GM10248 (cell line): ENCODE measurements at regions of chr15 and their contacts with region 1.

Region 1: DNA sequence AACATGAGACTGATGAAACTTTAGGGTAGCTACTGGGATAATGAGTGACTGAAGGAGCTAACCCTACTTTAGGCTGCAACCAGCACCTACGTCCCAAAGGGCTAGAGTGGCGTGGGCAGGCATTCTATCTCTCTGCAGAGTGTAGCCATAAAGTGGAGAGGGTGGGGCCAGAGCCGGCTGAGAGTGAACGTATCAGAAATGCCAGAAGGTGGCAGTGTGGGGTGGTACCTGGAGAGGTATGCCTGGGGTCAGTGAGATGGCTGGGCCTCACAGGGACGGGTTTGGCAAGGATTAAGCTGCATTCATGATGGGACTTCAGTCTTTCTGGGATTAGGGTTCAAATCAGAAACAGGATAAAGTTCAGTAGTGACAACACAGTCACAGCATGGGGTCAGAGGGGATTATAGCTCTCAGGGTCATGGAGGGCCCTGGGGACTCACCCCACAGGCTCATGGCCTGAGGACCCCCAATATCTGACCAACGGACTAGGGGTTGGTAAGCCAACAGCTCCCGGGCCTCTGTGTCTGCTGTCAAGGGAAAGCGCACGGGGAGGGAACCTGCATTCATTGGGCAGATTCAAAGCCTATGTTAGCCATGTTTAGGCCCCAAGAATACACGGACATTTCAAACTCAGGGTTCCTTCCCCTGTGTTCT is 86.5 kb upstream of the FOXB1 start:
- DNase-seq: peak; percentile 68
- CTCF ChIP-seq: peak; percentile 75

Region 2: DNA sequence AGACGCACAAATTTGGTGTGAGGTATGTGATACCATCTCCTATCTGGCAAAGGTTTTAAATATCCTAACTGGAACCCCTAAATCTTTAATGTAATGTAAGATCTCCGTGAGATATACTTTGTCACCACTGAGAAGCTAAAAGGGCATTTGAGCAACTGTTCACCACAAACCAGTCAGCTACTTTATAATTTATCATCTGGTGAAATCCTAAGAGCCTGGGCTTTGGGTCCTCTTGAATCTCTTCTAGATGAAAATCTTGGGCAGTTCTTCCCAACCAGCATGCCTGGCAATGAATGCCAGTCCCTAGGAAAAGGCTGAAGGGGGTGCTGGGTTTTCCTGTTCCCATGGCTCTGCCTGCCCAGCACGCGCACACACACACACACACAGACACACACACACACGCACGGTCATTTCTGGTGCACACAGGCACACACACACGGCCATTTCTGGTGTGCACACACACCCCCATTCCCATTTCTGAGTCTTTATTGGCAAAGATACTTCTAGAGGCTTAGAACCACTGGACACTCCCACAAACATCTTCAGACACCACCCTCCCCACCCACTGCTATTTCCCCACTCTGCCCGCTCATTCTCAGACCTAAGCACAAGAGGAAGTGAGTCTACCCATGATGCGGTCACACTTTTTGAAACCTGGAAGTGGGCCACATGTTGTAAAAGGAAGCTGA is 617.6 kb before region 1 on chr15:
- CTCF ChIA-PET with region 1: no interaction called
- POLR2A ChIA-PET with region 1: no interaction called
- DNase-seq: peak; percentile 70
- CTCF ChIP-seq: no peak

Region 3: DNA sequence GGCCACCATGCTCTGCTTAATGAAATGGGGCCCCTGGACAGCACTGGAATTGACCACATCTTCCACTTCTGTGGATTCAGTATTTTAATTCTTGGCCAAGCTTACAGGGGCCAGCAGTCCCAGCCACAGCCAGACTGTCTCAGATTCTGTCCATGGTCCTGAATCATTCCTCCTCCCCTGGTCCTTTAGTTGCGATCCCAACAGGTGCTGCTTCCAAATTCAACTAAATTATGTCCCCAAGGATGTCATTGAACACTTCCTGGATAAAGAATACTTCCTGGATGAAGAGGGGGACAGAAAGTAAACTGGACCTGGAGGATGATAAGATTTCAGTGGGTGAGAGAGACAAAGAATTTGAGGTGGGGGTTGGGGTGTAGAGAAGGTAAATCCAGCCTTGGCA is 24.6 kb before region 1 on chr15:
- CTCF ChIA-PET with region 1: no interaction called
- POLR2A ChIA-PET with region 1: no interaction called
- DNase-seq: no peak
- CTCF ChIP-seq: no peak

Region 4: GRCh38 chr15:59904450-59905135 is 13.0 kb before region 1 on chr15:
- CTCF ChIA-PET with region 1: interaction called, 12 read pairs
- POLR2A ChIA-PET with region 1: no interaction called
- DNase-seq: no peak
- CTCF ChIP-seq: no peak

Region 5: DNA sequence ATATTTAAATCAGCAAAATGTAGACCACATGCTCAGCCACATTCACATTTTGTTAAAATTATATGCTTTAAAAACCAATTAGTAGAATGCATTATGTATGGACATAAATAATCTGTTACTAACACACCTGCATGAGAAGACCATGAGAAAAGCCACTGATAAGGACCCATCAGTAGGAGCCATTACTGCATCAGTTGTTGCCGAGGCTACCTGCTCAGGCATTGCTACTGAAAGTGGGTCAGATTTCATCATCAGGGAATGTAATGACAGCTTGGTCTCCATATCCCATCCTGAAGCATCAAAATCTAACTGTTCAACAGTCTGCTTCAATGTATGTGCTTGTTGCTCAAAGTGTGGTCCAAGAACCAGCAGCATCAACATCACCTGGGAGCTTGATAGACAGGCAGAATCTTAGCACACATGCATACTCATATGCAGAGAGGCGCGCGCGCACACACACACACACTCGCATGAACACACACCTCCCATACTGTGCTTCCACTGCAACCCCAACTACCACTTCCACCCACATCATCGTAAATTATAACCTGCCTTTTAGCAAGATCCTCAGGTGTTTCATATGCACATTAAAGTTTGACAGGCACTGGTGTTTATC is 14.1 kb after region 1 on chr15:
- CTCF ChIA-PET with region 1: interaction called, 11 read pairs
- POLR2A ChIA-PET with region 1: no interaction called
- DNase-seq: no peak
- CTCF ChIP-seq: no peak

Region 6: GRCh38 chr15:59941612-59942011 is 24.0 kb after region 1 on chr15:
- CTCF ChIA-PET with region 1: interaction called, 13 read pairs
- POLR2A ChIA-PET with region 1: no interaction called
- DNase-seq: no peak
- CTCF ChIP-seq: no peak

Region 7: DNA sequence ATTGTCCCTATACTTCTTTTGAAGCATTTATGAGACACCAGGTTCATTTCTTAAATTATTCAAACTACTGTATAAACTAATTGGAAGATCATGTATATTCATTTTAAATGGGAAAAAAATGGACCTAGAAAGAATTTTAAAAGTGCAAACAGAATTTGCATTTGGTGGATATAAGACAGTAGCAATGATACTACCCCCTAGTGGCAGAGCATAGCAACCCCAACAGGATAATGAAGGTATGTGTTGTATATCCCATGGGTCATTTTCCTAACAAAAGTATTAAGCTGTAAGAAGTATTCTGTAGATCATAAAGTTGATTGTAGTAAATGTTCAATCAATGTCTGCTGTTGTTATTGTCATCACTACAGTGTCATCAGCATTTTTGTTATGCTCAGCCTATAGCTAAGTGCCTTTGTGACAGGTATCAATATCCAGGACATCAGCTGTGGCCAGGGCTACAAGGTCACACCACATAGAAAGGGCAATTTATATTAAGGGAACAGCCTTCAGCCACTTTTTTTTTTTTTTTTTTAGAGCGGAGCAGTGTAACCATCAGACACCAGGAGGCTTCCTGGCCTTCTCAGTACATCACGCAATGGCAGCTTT is 262.3 kb after region 1 on chr15:
- CTCF ChIA-PET with region 1: interaction called, 56 read pairs
- POLR2A ChIA-PET with region 1: no interaction called
- DNase-seq: peak; percentile 21
- CTCF ChIP-seq: peak; percentile 79

Region 8: DNA sequence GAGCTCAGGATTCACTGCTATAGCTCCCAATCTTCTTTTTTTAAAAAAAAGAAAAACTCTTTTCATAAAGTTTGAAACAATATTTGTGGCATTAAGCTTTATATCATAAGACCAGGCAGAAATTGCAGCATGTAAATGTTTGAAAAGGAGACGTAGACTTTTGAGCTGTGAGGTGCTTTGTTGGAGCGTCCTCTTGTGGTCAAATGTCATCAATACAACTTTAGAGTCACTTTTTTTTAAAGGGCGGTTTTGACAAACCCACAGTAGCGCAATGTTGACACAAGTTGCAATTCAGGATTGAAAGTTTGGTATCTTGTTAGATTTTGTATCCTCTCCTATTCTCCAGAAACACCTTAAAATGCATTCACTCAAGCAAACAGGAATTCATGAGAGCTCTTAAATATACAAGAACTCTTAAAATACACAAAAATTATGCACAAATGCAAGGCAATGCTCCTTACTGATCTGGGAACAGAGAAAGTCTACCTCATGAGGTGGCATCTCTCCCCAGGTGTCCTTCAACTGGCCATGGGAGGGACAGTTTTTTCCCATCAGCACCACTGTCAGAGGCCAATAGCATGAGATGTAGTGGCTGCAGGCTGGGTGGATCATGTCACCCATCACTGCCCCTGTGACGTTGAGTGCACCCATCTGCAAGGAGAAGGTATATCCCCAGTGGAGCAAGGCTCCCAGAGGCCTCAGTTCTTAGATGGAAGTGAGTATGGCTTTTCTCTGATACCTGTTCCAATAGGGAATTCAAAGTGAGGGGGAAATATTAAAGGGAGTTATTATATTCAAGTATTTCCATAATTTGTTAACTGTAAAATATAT is 409.4 kb after region 1 on chr15:
- CTCF ChIA-PET with region 1: interaction called, 55 read pairs
- POLR2A ChIA-PET with region 1: no interaction called
- DNase-seq: peak; percentile 29
- CTCF ChIP-seq: peak; percentile 66